PC-3 (cell line): ENCODE measurements at regions of chrX and their contacts with region 1.

Region 1: GRCh38 chrX:110450050-110450449 is 91.4 kb downstream of the RTL9 start:
- DNase-seq: peak; percentile 81
- ATAC-seq: peak; percentile 99
- H3K4me3 ChIP-seq: no peak overlapping the region
- H3K27ac ChIP-seq: no peak overlapping the region
- H3K4me1 ChIP-seq: no peaks in the 10 kb centered on the region
- H3K27me3 ChIP-seq: peaks cover 50% of the 10 kb centered on the region
- CTCF ChIP-seq: peak; percentile 78

Region 2: DNA sequence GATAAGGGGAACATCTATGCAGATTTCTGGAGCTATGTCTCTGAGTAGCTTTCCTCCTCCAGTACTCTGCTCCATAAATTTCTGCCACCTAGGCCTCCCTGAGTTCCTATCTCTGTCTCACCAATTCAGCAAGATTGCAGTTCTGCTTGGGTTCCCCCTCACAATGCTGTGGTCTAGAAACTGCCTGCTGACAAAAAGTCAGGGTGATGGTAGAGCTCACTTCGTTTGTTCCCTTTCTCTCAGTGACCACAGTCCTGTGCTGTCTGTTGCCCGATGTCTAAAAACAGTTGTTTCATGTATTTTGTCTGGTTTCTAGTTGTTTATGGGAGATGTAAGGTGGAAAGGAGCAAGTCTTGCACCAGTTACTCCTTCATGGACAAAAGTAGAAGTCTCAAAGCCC is 173.3 kb before region 1 on chrX:
- CTCF ChIA-PET with region 1: no interaction called
- POLR2A ChIA-PET with region 1: no interaction called
- intact Hi-C with region 1: no loop called
- DNase-seq: no peak
- ATAC-seq: no peak
- H3K4me3 ChIP-seq: no peak overlapping the region
- H3K27ac ChIP-seq: no peak overlapping the region
- H3K4me1 ChIP-seq: peaks cover 25% of the 10 kb centered on the region
- H3K27me3 ChIP-seq: no peaks in the 10 kb centered on the region
- CTCF ChIP-seq: no peak

Region 3: DNA sequence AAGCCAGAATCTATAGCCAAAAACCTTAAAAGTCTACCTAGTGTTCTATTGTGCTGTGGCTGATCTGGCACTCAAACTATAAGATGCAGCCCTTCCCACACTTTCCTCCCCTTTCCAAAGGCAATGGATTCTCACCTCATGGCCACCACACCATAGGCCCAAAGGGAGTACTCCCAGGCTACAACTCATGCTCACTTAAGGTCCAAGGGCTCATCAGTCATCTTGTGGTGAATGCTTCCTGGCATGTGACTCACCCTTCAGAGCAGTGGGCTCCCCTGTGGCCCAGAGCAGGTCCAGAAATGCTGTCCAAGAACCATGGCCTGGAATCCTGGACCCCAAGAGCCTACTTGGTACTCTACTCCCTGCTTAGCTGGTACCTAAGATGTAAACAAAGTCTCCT is 164.5 kb after region 1 on chrX:
- CTCF ChIA-PET with region 1: no interaction called
- POLR2A ChIA-PET with region 1: no interaction called
- intact Hi-C with region 1: no loop called
- DNase-seq: no peak
- ATAC-seq: no peak
- H3K4me3 ChIP-seq: no peak overlapping the region
- H3K27ac ChIP-seq: no peak overlapping the region
- H3K4me1 ChIP-seq: no peaks in the 10 kb centered on the region
- H3K27me3 ChIP-seq: no peaks in the 10 kb centered on the region
- CTCF ChIP-seq: no peak

Region 4: DNA sequence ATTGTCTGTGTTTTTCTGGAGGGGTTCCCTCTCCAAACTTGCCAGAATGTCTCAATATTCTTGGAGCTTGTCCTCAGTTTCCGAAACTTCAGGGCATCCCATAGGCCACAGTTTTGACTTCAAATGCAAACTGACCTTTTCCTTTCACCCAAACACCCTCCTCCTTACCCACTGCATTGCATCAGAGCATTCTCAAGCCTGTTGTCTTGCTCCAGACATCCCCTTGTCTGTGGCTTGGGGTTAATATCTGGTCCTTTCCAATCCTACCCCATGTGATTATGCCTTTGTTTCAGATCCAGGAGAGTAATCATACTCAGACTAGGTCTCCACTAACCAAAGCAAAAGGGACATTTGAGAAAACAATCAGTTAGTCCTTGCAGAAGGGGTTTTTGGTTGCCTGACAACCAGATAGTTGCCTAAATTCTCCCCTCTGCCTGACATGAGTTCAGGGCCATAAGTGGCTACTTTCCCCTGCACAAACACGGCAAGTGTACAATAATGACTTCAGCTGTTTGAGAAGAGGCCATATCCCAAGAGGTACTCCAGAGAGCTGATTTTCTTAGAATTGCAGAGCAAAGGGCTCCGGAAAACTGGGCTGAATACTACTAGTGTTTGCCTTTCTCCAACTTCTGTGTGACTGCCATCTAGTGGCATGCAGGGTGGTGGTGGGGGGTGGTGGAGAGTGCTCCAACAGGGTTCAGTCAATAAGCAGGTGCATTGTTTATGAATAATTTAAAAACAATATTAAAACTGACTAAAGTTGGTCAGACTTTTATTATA is 215.4 kb after region 1 on chrX:
- CTCF ChIA-PET with region 1: no interaction called
- POLR2A ChIA-PET with region 1: no interaction called
- intact Hi-C with region 1: loop called (anchors 1 kb)
- DNase-seq: peak; percentile 48
- ATAC-seq: peak; percentile 66; the same call in 1 of the 2 replicates
- H3K4me3 ChIP-seq: no peak overlapping the region
- H3K27ac ChIP-seq: no peak overlapping the region
- H3K4me1 ChIP-seq: no peaks in the 10 kb centered on the region
- H3K27me3 ChIP-seq: no peaks in the 10 kb centered on the region
- CTCF ChIP-seq: peak; percentile 68

Region 5: DNA sequence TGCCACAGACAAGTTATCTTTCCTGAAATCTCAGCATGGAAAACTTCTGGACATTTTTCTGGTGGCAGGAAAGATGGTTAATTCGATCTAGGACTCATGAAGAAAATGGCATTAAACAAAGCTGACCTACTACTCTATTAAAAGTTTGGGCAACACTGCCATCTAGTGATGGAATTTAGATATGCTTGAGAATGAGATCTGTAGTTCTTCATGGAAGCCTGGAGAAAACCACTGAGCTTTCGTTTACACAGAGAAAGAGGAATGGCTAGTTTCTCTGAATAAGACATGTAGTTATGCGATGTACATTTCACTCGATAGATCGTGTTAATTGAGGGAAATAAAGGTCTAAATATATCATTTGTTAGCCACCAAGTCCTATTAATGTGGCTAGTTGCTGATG is 397.3 kb after region 1 on chrX:
- CTCF ChIA-PET with region 1: no interaction called
- POLR2A ChIA-PET with region 1: no interaction called
- intact Hi-C with region 1: loop called (anchors 1 kb)
- DNase-seq: peak; percentile 78
- ATAC-seq: peak; percentile 79
- H3K4me3 ChIP-seq: no peak overlapping the region
- H3K27ac ChIP-seq: no peak overlapping the region
- H3K4me1 ChIP-seq: no peaks in the 10 kb centered on the region
- H3K27me3 ChIP-seq: no peaks in the 10 kb centered on the region
- CTCF ChIP-seq: peak; percentile 70